Mammary epithelial cell (primary cell): ENCODE measurements at regions of chr10 and their contacts with region 1.

Region 1: GRCh38 chr10:64041185-64041988 is 520.2 kb downstream of the REEP3 start:
- DNase-seq: peak; percentile 64
- H3K4me3 ChIP-seq: peak overlapping the region in 2 of 3 experiments; percentile 7 to 42
- H3K27ac ChIP-seq: no peak overlapping the region
- H3K4me1 ChIP-seq: no peaks in the 10 kb centered on the region
- H3K27me3 ChIP-seq: peaks cover 6% of the 10 kb centered on the region
- CTCF ChIP-seq: peak; percentile 99 to 100

Region 2: DNA sequence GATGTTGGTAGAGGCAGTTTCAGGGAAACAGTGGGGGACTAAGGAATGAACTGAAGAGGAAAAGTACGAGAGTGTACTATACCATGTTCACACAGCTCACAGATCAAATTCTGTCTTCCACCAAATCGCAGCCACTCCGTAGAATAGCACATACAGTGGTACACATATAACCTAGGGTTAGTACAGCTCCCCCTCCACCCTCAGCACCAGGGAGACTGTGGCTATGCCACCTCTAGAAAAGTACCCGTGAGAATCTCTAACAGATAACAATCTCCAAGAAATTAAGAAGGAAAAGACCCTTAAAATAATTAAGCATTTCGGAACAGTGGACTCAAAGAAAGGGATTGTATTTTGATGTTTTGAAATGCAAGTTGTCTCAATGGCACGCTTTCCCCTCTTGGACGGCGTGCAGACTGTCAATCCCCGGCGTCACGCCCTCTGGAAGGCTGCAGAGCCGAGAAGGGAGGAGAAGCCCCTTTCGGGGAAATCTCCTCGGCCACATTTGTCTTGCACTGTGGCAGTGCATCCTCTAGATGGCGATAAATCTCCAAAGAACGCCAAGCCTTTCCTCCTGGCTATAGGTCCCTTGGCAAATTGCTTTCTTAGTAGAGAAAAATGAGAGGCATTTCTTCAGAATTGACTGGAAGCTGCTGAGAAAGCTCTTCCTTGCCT is 175.2 kb before region 1 on chr10:
- CTCF ChIA-PET with region 1: no interaction called
- dilution Hi-C with region 1: no loop called
- in situ Hi-C with region 1: no loop called
- intact Hi-C with region 1: loop called (anchors 2 kb)
- DNase-seq: peak; percentile 25
- H3K4me3 ChIP-seq: no peak overlapping the region
- H3K27ac ChIP-seq: no peak overlapping the region
- H3K4me1 ChIP-seq: peaks cover 7% of the 10 kb centered on the region
- H3K27me3 ChIP-seq: peaks cover 6% of the 10 kb centered on the region
- CTCF ChIP-seq: peak; percentile 84 to 88

Region 3: GRCh38 chr10:63940277-63940972 is 101.0 kb before region 1 on chr10:
- CTCF ChIA-PET with region 1: no interaction called
- dilution Hi-C with region 1: no loop called
- in situ Hi-C with region 1: no loop called
- intact Hi-C with region 1: no loop called
- DNase-seq: no peak
- H3K4me3 ChIP-seq: no peak overlapping the region
- H3K27ac ChIP-seq: no peak overlapping the region
- H3K4me1 ChIP-seq: no peaks in the 10 kb centered on the region
- H3K27me3 ChIP-seq: no peaks in the 10 kb centered on the region
- CTCF ChIP-seq: no peak

Region 4: DNA sequence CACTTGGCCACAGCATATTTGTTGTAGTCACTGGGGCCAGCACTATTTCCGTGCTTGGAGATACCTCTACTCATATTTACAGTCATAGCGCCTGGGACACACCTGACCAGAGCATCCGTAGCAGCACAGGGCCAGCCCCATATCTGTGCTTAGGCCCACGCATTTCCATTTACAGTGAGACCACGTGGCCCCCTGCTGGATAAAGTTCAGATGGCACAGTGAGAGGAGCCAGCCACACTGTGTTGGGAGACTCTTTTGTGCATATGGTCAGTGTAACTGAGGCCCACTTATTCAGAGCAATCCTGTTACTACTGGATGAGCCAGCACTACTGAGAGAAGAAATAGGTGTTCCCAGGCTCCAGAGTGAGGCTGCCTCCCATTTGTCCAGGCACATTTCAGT is 64.8 kb before region 1 on chr10:
- CTCF ChIA-PET with region 1: no interaction called
- dilution Hi-C with region 1: no loop called
- in situ Hi-C with region 1: no loop called
- intact Hi-C with region 1: loop called (anchors 2 kb)
- DNase-seq: peak; percentile 9
- H3K4me3 ChIP-seq: no peak overlapping the region
- H3K27ac ChIP-seq: no peak overlapping the region
- H3K4me1 ChIP-seq: no peaks in the 10 kb centered on the region
- H3K27me3 ChIP-seq: no peaks in the 10 kb centered on the region
- CTCF ChIP-seq: peak; percentile 58 to 64

Region 5: GRCh38 chr10:64708884-64709681 is 667.7 kb after region 1 on chr10:
- CTCF ChIA-PET with region 1: no interaction called
- dilution Hi-C with region 1: no loop called
- in situ Hi-C with region 1: no loop called
- intact Hi-C with region 1: loop called (anchors 10 kb)
- DNase-seq: no peak
- H3K4me3 ChIP-seq: no peak overlapping the region
- H3K27ac ChIP-seq: no peak overlapping the region
- H3K4me1 ChIP-seq: no peaks in the 10 kb centered on the region
- H3K27me3 ChIP-seq: no peaks in the 10 kb centered on the region
- CTCF ChIP-seq: no peak